ENCODE measurements at regions of chr3 and their contacts with region 1.

Region 1: GRCh38 chr3:52001443-52001974 is 5.8 kb upstream of the RPL29 start:
- DNase-seq: peak; percentile 69 to 88 (median 74)
- ATAC-seq: peak; percentile 35 to 67 (median 63)
- H3K4me3 ChIP-seq: no peak overlapping the region
- H3K27ac ChIP-seq: no peak overlapping the region
- H3K4me1 ChIP-seq: peaks cover 13 to 34% (median 31%) of the 10 kb centered on the region in 12 donors
- H3K27me3 ChIP-seq: no peaks in the 10 kb centered on the region
- CTCF ChIP-seq: peak; percentile 76 to 96 (median 90)
- POLR2A ChIP-seq: no peak

Region 2: DNA sequence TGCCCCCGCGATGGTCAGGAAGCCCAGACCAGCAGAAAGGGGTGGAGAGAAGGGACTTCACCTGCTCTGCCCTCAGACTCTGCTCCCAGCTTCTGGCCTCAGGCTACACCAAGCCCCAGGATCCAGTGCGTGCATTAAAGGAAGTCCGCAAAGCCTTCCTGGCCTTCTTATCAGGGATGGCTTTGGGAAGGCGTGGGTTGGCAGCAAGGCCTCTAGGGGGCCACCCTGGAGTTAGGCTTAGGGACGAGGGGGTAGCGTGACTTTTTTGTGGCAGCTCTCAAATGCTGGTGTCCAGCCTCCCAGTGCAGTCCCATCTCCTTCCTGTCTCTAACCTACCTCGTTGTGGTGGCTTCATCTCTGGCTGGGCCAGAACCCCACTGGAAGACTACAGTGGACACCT is 13.1 kb after region 1 on chr3:
- intact Hi-C with region 1: no loop called
- DNase-seq: no peak
- ATAC-seq: no peak
- H3K4me3 ChIP-seq: no peak overlapping the region
- H3K27ac ChIP-seq: no peak overlapping the region
- H3K4me1 ChIP-seq: peaks cover 12 to 64% (median 34%) of the 10 kb centered on the region in 12 donors
- H3K27me3 ChIP-seq: no peaks in the 10 kb centered on the region
- CTCF ChIP-seq: peak in 4 of 12 donors; percentile 9 to 20 (median 18)
- POLR2A ChIP-seq: no peak

Region 3: DNA sequence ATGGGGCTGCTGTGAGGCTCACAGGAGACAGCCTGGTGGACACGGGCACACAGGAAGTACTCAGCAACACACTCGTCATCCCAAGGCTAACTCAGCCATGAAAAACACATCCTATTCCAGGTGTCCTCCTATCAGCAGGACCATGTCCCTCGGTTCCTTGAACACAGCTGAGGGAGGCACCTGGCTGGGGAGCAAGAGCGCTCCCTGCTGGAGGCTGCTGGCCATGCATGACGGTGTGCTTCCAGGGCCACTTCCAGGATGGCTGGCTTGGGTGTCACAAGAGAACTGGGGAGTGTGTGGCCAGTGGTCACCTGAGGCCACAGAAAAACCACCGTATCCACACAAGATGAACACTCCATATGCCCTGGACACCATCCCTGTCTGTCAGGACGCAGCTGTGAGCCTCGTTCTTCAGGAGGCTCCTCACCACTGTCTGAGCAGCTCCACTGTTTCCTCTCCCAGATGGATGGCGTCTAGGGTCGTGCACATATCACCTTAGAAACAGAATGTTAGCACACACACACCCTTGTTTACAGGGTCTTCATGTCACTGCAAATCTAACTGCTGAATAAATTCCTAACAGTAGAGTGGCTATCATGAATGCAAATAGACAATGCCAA is 121.7 kb after region 1 on chr3:
- intact Hi-C with region 1: loop called (anchors 1 to 5 kb)
- DNase-seq: peak; percentile 75 to 88 (median 79)
- ATAC-seq: peak; percentile 86
- H3K4me3 ChIP-seq: no peak overlapping the region
- H3K27ac ChIP-seq: peak overlapping the region in 10 of 12 donors; percentile 65 to 89 (median 80)
- H3K4me1 ChIP-seq: peaks cover 6 to 50% (median 30%) of the 10 kb centered on the region in 12 donors
- H3K27me3 ChIP-seq: no peaks in the 10 kb centered on the region
- CTCF ChIP-seq: peak; percentile 88 to 99 (median 95)
- POLR2A ChIP-seq: no peak

Region 4: DNA sequence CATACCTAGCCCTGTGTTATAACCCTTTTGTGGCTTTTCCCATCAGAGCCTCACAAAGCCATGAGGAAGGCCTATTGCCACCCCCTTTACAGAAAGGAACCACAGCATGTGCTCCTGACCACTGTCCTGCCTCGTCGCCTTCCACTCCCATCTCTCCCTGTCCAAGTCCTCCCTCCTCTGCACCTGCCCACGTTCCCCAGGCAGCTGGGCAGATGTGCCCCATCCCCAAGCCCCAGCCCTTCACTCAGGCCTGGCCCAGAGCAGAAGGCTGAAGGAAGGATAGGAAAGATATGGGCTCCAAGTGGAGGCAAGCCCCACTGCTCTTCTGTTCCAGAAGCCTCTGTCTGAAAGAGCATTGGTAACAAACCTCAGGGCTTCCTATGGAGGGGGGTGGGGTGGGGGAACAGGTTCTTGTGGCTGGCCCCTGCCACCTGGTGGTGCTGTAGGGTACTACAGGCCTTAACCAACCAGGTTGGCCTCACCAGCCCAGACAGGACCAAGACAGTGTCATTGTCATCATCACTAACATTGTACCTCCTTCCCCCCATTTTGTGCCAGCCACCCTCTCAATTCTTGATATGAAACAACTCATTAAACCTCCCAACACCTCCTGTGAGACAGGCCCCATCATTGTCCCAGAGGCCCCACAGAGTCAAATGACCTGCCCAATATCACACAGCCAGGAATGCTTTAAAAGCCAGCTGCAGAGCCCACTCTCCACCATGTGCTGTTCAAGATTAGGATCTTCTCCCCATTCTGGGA is 142.7 kb after region 1 on chr3:
- intact Hi-C with region 1: loop called (anchors 1 to 2 kb)
- DNase-seq: peak; percentile 86 to 89 (median 89)
- ATAC-seq: peak; percentile 38 to 81 (median 76)
- H3K4me3 ChIP-seq: no peak overlapping the region
- H3K27ac ChIP-seq: no peak overlapping the region
- H3K4me1 ChIP-seq: peaks cover 0 to 21% (median 6%) of the 10 kb centered on the region in 12 donors
- H3K27me3 ChIP-seq: no peaks in the 10 kb centered on the region
- CTCF ChIP-seq: peak; percentile 90 to 99 (median 98)
- POLR2A ChIP-seq: no peak

Region 5: GRCh38 chr3:52204337-52205073 is 203.0 kb after region 1 on chr3:
- intact Hi-C with region 1: loop called in 1 of 10 experiments (anchors 5 kb)
- DNase-seq: no peak
- ATAC-seq: no peak
- H3K4me3 ChIP-seq: no peak overlapping the region
- H3K27ac ChIP-seq: no peak overlapping the region
- H3K4me1 ChIP-seq: peaks cover 5 to 50% (median 34%) of the 10 kb centered on the region in 12 donors
- H3K27me3 ChIP-seq: no peaks in the 10 kb centered on the region
- CTCF ChIP-seq: no peak
- POLR2A ChIP-seq: no peak

Measured in heart left ventricle (tissue), 16 donors.